Activated naive CD4-positive, alpha-beta T cell treated with anti-CD3 and anti-CD28 coated beads for 36 hours (primary cell): ENCODE measurements at regions of chr6 and their contacts with region 1.

Region 1: DNA sequence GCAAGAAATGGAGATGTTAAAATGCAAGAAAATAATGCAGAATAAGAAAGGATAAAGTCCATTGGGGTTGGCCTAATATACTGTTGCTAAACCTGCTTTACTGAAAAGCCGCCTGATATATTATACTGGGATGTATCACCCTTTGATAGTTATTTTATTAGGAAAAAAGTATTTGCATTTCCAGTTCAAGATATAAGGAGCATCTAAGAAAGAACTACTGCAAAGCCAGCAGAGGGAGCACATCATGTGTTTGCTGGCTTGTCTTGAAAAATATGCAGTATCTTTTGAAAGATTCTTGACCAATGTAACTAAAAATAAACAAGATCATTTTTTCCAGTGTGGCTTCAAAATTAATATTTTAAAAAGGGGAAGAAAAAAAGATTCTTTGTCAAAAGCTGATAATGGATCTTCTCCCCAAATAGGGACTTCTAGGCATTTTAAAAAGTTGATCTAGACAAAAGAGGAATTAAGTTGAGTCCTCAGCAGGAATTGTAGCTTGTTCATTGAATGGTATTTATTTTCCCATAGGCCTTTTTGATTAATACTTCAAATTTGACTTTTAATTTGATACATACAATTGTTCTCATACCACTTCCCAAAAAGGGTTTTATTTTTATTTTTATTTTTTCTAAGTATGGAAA is 214.9 kb downstream of the ZFAND3 start:
- DNase-seq: peak; percentile 7
- H3K4me3 Mint-ChIP-seq: no peak overlapping the region
- H3K27ac Mint-ChIP-seq: no peak overlapping the region
- H3K4me1 Mint-ChIP-seq: peaks cover 51% of the 10 kb centered on the region
- H3K27me3 Mint-ChIP-seq: no peaks in the 10 kb centered on the region

Region 2: GRCh38 chr6:37456816-37457560 is 577.4 kb before region 1 on chr6:
- CTCF ChIA-PET with region 1: no interaction called
- intact Hi-C with region 1: no loop called
- DNase-seq: no peak
- H3K4me3 Mint-ChIP-seq: no peak overlapping the region
- H3K27ac Mint-ChIP-seq: no peak overlapping the region
- H3K4me1 Mint-ChIP-seq: peaks cover 6% of the 10 kb centered on the region
- H3K27me3 Mint-ChIP-seq: no peaks in the 10 kb centered on the region

Region 3: GRCh38 chr6:38493931-38494547 is 459.6 kb after region 1 on chr6:
- CTCF ChIA-PET with region 1: interaction called, 5 read pairs
- intact Hi-C with region 1: loop called (anchors 2 kb)
- DNase-seq: peak; percentile 95
- H3K4me3 Mint-ChIP-seq: no peak overlapping the region
- H3K27ac Mint-ChIP-seq: no peak overlapping the region
- H3K4me1 Mint-ChIP-seq: peaks cover 10% of the 10 kb centered on the region
- H3K27me3 Mint-ChIP-seq: no peaks in the 10 kb centered on the region